Left ventricle myocardium inferior (tissue), 1 donor: ENCODE measurements at regions of chr5 and their contacts with region 1.

Region 1: GRCh38 chr5:114449860-114450421 is 88.1 kb downstream of the KCNN2 start:
- DNase-seq: peak; percentile 61
- H3K4me3 ChIP-seq: peak overlapping the region; percentile 26
- H3K27ac ChIP-seq: peak overlapping the region; percentile 45
- H3K4me1 ChIP-seq: peaks cover 27% of the 10 kb centered on the region
- H3K27me3 ChIP-seq: no peaks in the 10 kb centered on the region
- CTCF ChIP-seq: peak; percentile 86

Region 2: DNA sequence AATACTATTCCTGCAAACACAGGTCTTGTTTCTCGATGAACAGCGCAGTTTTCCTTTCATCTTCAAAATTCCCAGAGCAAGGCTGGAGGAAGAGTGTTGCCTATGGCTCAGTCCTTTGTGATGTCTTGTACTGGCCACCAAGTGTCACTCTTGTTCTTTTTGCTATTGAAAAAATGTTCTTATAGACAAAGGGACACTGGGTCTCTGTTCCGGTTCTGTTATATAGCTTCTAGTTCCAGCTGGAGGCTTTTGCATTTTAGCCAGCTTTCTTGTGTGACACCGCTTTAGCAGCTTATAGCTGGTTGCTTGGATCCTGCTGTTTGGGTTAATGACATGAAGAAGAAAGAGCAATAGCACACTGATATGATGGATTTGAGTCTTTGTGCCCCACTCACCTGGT is 431.8 kb before region 1 on chr5:
- intact Hi-C with region 1: loop called (anchors 5 kb)
- DNase-seq: no peak
- H3K4me3 ChIP-seq: no peak overlapping the region
- H3K27ac ChIP-seq: no peak overlapping the region
- H3K4me1 ChIP-seq: no peaks in the 10 kb centered on the region
- H3K27me3 ChIP-seq: peaks cover 21% of the 10 kb centered on the region
- CTCF ChIP-seq: peak; percentile 70

Region 3: GRCh38 chr5:114097570-114097969 is 352.4 kb before region 1 on chr5:
- intact Hi-C with region 1: loop called (anchors 10 kb)
- DNase-seq: no peak
- H3K4me3 ChIP-seq: no peak overlapping the region
- H3K27ac ChIP-seq: no peak overlapping the region
- H3K4me1 ChIP-seq: no peaks in the 10 kb centered on the region
- H3K27me3 ChIP-seq: no peaks in the 10 kb centered on the region
- CTCF ChIP-seq: no peak

Region 4: GRCh38 chr5:114387433-114387832 is 62.5 kb before region 1 on chr5:
- intact Hi-C with region 1: no loop called
- DNase-seq: no peak
- H3K4me3 ChIP-seq: no peak overlapping the region
- H3K27ac ChIP-seq: no peak overlapping the region
- H3K4me1 ChIP-seq: no peaks in the 10 kb centered on the region
- H3K27me3 ChIP-seq: no peaks in the 10 kb centered on the region
- CTCF ChIP-seq: no peak